ENCODE measurements at regions of chr18 and their contacts with region 1.

Region 1: DNA sequence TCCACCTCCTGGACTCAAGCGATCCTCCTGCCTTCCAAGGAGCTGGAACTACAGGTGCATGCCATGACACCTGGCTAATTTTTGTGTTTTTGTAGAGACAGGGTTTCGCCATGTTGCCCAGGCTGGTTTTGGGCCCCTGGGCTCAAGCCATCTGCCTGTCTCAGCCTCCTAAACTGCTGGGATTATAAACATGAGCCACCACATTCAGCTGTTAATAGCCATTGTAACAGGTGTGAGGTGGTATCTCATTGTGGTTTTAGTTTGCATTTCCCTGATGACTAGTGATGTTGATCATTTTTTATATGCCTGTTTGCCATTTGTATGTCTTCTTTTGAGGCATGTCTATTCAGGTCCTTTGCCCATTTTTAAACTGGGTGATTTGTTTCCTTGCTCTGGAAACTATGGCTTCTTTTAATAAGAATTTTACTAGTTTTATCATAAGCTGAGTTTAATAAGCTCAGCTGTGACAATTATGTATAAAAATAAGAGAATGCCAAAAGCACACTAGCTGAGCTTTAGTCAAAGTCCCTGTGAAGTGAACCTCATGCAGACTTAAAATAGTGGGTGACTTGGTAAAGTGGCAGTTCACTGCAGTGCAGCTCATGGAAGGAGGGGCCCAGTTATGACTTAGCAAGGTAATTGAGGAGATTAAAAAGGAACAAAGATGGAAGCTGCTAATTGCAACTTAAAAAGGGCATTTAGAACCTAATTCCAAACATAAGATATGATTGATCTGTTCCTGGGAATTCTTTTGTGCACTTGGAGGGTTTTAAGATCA is 465.1 kb downstream of the TGIF1 start:
- DNase-seq: peak; percentile 91
- H3K4me3 ChIP-seq: peak overlapping the region; percentile 43
- H3K27ac ChIP-seq: peak overlapping the region; percentile 93
- H3K4me1 ChIP-seq: peaks cover 71% of the 10 kb centered on the region
- CTCF ChIP-seq: no peak

Region 2: DNA sequence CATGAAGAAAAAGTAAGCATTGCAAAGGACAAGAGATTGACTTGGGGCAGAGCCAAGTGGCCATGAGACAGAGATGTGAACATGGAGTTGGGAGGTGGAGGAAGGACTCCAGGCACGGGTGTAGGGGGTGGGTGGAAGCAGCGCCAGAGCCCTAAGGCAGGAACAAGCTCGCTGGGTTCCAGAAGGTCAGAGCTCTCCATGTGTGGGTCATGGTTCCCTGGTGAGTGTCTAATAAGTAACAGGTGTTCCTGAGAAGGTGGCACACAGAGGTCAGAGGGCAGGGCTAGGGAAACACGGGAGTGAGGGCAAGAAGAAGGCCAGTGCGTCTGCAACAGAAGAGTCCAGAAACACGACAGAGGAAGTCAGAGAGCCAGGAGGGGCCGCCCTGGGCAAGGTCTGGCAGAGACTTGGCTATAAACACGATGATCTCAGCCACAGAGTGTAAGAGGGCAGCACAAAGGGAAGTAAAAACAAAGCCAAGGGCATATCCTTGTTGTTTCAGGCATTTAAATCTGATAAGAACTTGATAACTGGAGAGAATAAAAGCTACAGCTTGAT is 204.2 kb before region 1 on chr18:
- CTCF ChIA-PET with region 1: no interaction called
- POLR2A ChIA-PET with region 1: no interaction called
- intact Hi-C with region 1: no loop called
- DNase-seq: peak; percentile 20
- H3K4me3 ChIP-seq: no peak overlapping the region
- H3K27ac ChIP-seq: no peak overlapping the region
- H3K4me1 ChIP-seq: peaks cover 62% of the 10 kb centered on the region
- CTCF ChIP-seq: no peak; the same call in 1 of the 2 replicates

Region 3: GRCh38 chr18:3898861-3899613 is 16.0 kb before region 1 on chr18:
- CTCF ChIA-PET with region 1: no interaction called
- POLR2A ChIA-PET with region 1: interaction called, 11 read pairs
- intact Hi-C with region 1: no loop called
- DNase-seq: no peak
- H3K4me3 ChIP-seq: no peak overlapping the region
- H3K27ac ChIP-seq: no peak overlapping the region
- H3K4me1 ChIP-seq: peaks cover 4% of the 10 kb centered on the region
- CTCF ChIP-seq: no peak

Region 4: DNA sequence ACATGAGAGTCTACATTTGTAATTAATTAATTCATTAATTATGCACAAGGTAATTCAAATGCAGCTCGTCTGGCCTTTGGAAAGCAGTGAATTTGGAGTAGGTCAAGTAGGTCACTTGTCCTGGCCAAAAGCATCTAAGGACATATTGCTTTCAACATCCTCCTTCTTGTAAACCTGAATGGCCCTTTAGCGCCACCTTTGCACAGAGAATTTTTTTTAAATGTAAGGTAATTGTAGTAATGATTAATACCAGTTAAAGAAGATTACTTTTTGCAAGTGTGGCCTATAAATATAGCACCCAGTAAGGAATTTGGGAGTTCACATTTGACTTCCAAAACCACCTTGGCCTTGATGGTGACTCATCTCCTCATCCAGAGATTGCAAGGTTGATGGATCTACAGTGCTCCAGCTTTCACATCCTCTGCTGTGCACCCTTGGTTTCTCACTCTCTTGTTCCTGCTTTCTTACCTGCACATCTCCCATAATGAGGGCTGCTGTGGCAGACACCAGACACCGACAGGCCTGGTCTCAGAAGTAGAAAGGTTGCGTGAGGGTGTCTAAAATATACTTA is 16.6 kb after region 1 on chr18:
- CTCF ChIA-PET with region 1: interaction called, 3 read pairs
- POLR2A ChIA-PET with region 1: interaction called, 26 read pairs
- intact Hi-C with region 1: loop called (anchors 2 kb)
- DNase-seq: no peak
- H3K4me3 ChIP-seq: no peak overlapping the region
- H3K27ac ChIP-seq: no peak overlapping the region
- H3K4me1 ChIP-seq: peaks cover 26% of the 10 kb centered on the region
- CTCF ChIP-seq: peak; percentile 67

Region 5: GRCh38 chr18:5295981-5296705 is 1381.1 kb after region 1 on chr18:
- CTCF ChIA-PET with region 1: no interaction called
- POLR2A ChIA-PET with region 1: interaction called, 4 read pairs
- intact Hi-C with region 1: loop called (anchors 10 kb)
- DNase-seq: peak; percentile 97
- H3K4me3 ChIP-seq: peak overlapping the region; percentile 86
- H3K27ac ChIP-seq: peak overlapping the region; percentile 92
- H3K4me1 ChIP-seq: peaks cover 43% of the 10 kb centered on the region
- CTCF ChIP-seq: no peak

Measured in OCI-LY7 (cell line).